Natural killer cell (primary cell): ENCODE measurements at regions of chr10 and their contacts with region 1.

Region 1: GRCh38 chr10:35153716-35154479 is 27.3 kb downstream of the CREM start:
- DNase-seq: no peak
- ATAC-seq: no peak
- H3K4me3 ChIP-seq: no peak overlapping the region
- H3K4me3 Mint-ChIP-seq: no peak overlapping the region
- H3K27ac ChIP-seq: no peak overlapping the region
- H3K27ac Mint-ChIP-seq: no peak overlapping the region
- H3K4me1 ChIP-seq: peaks cover 17% of the 10 kb centered on the region
- H3K4me1 Mint-ChIP-seq: peaks cover 18 to 21% of the 10 kb centered on the region in 2 donors
- H3K27me3 ChIP-seq: no peaks in the 10 kb centered on the region
- H3K27me3 Mint-ChIP-seq: no peaks in the 10 kb centered on the region
- CTCF ChIP-seq: no peak

Region 2: GRCh38 chr10:34689053-34689452 is 464.8 kb before region 1 on chr10:
- intact Hi-C with region 1: no loop called
- DNase-seq: no peak
- ATAC-seq: no peak
- H3K4me3 ChIP-seq: no peak overlapping the region
- H3K4me3 Mint-ChIP-seq: no peak overlapping the region
- H3K27ac ChIP-seq: no peak overlapping the region
- H3K27ac Mint-ChIP-seq: no peak overlapping the region
- H3K4me1 ChIP-seq: no peaks in the 10 kb centered on the region
- H3K4me1 Mint-ChIP-seq: no peaks in the 10 kb centered on the region
- H3K27me3 ChIP-seq: no peaks in the 10 kb centered on the region
- H3K27me3 Mint-ChIP-seq: peaks cover 0 to 7% of the 10 kb centered on the region in 2 donors
- CTCF ChIP-seq: no peak

Region 3: GRCh38 chr10:35132727-35133126 is 21.2 kb before region 1 on chr10:
- intact Hi-C with region 1: loop called (anchors 1 kb)
- DNase-seq: no peak
- ATAC-seq: no peak
- H3K4me3 ChIP-seq: no peak overlapping the region
- H3K4me3 Mint-ChIP-seq: peak overlapping the region; percentile 69
- H3K27ac ChIP-seq: peak overlapping the region; percentile 84
- H3K27ac Mint-ChIP-seq: peak overlapping the region; percentile 89 to 93
- H3K4me1 ChIP-seq: peaks cover 32% of the 10 kb centered on the region
- H3K4me1 Mint-ChIP-seq: peaks cover 39 to 47% of the 10 kb centered on the region in 2 donors
- H3K27me3 ChIP-seq: no peaks in the 10 kb centered on the region
- H3K27me3 Mint-ChIP-seq: no peaks in the 10 kb centered on the region
- CTCF ChIP-seq: no peak

Region 4: GRCh38 chr10:35218339-35218955 is 64.5 kb after region 1 on chr10:
- intact Hi-C with region 1: loop called (anchors 1 kb)
- DNase-seq: peak; percentile 73 to 94
- ATAC-seq: peak; percentile 53 to 80 (median 68)
- H3K4me3 ChIP-seq: no peak overlapping the region
- H3K4me3 Mint-ChIP-seq: peak overlapping the region; percentile 81
- H3K27ac ChIP-seq: peak overlapping the region; percentile 46
- H3K27ac Mint-ChIP-seq: peak overlapping the region; percentile 91 to 96
- H3K4me1 ChIP-seq: peaks cover 35% of the 10 kb centered on the region
- H3K4me1 Mint-ChIP-seq: peaks cover 40 to 42% of the 10 kb centered on the region in 2 donors
- H3K27me3 ChIP-seq: no peaks in the 10 kb centered on the region
- H3K27me3 Mint-ChIP-seq: no peaks in the 10 kb centered on the region
- CTCF ChIP-seq: peak; percentile 77

Region 5: GRCh38 chr10:35236739-35237138 is 82.8 kb after region 1 on chr10:
- intact Hi-C with region 1: no loop called
- DNase-seq: no peak
- ATAC-seq: no peak
- H3K4me3 ChIP-seq: no peak overlapping the region
- H3K4me3 Mint-ChIP-seq: no peak overlapping the region
- H3K27ac ChIP-seq: no peak overlapping the region
- H3K27ac Mint-ChIP-seq: no peak overlapping the region
- H3K4me1 ChIP-seq: no peaks in the 10 kb centered on the region
- H3K4me1 Mint-ChIP-seq: no peaks in the 10 kb centered on the region
- H3K27me3 ChIP-seq: no peaks in the 10 kb centered on the region
- H3K27me3 Mint-ChIP-seq: no peaks in the 10 kb centered on the region
- CTCF ChIP-seq: no peak